ENCODE measurements at regions of chr1 and their contacts with region 1.

Region 1: GRCh38 chr1:91997607-91998195 is 32.1 kb upstream of the EPHX4 start:
- DNase-seq: peak; percentile 64
- H3K4me3 ChIP-seq: no peak overlapping the region
- CTCF ChIP-seq: peak; percentile 53

Region 2: DNA sequence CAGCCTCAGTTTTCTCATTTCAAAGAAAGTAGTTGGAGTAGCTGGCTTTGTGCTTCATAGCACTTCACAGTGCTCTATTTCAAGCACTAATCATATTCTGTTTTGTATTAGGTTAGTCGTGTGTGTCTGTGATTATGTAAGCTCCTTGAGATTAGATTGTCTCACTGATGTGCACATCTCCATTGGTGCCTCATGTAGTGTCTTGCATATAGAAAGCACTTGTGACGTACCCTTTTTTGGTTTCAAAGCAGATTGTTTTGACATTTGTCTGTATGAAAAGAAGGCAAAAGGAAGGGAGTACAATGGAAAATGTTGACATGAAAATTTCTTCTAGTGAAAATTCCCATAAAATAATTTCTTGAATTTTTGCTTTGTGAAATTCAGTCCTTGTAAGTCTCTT is 96.4 kb after region 1 on chr1:
- in situ Hi-C with region 1: loop called (anchors 5 kb)
- DNase-seq: no peak
- H3K4me3 ChIP-seq: no peak overlapping the region
- CTCF ChIP-seq: no peak

Measured in astrocyte of the cerebellum (primary cell).